Sigmoid colon (tissue), 7 donors: ENCODE measurements at regions of chr6 and their contacts with region 1.

Region 1: GRCh38 chr6:170024952-170025911 is 265.6 kb downstream of the DLL1 start:
- DNase-seq: peak; percentile 94
- H3K4me3 ChIP-seq: no peak overlapping the region
- H3K27ac ChIP-seq: peak overlapping the region in 2 of 4 donors; percentile 61 to 77
- H3K4me1 ChIP-seq: peaks cover 0 to 47% (median 30%) of the 10 kb centered on the region in 4 donors
- H3K27me3 ChIP-seq: peaks cover 0 to 12% (median 11%) of the 10 kb centered on the region in 3 donors
- CTCF ChIP-seq: no peak
- EP300 ChIP-seq: peak in 1 of 4 donors; percentile 33
- POLR2A ChIP-seq: no peak

Region 2: GRCh38 chr6:169427856-169428255 is 597.4 kb before region 1 on chr6:
- intact Hi-C with region 1: no loop called
- DNase-seq: peak; percentile 74
- H3K4me3 ChIP-seq: peak overlapping the region in 1 of 4 donors; percentile 0
- H3K27ac ChIP-seq: peak overlapping the region; percentile 59 to 70 (median 62)
- H3K4me1 ChIP-seq: peaks cover 0 to 17% (median 10%) of the 10 kb centered on the region in 4 donors
- H3K27me3 ChIP-seq: no peaks in the 10 kb centered on the region
- CTCF ChIP-seq: no peak
- EP300 ChIP-seq: no peak
- POLR2A ChIP-seq: no peak

Region 3: GRCh38 chr6:169959136-169960002 is 65.9 kb before region 1 on chr6:
- intact Hi-C with region 1: loop called (anchors 5 kb)
- DNase-seq: peak; percentile 82
- H3K4me3 ChIP-seq: no peak overlapping the region
- H3K27ac ChIP-seq: no peak overlapping the region
- H3K4me1 ChIP-seq: peaks cover 0 to 15% (median 10%) of the 10 kb centered on the region in 4 donors
- H3K27me3 ChIP-seq: peaks cover 4 to 17% (median 5%) of the 10 kb centered on the region in 3 donors
- CTCF ChIP-seq: no peak
- EP300 ChIP-seq: no peak
- POLR2A ChIP-seq: no peak

Region 4: DNA sequence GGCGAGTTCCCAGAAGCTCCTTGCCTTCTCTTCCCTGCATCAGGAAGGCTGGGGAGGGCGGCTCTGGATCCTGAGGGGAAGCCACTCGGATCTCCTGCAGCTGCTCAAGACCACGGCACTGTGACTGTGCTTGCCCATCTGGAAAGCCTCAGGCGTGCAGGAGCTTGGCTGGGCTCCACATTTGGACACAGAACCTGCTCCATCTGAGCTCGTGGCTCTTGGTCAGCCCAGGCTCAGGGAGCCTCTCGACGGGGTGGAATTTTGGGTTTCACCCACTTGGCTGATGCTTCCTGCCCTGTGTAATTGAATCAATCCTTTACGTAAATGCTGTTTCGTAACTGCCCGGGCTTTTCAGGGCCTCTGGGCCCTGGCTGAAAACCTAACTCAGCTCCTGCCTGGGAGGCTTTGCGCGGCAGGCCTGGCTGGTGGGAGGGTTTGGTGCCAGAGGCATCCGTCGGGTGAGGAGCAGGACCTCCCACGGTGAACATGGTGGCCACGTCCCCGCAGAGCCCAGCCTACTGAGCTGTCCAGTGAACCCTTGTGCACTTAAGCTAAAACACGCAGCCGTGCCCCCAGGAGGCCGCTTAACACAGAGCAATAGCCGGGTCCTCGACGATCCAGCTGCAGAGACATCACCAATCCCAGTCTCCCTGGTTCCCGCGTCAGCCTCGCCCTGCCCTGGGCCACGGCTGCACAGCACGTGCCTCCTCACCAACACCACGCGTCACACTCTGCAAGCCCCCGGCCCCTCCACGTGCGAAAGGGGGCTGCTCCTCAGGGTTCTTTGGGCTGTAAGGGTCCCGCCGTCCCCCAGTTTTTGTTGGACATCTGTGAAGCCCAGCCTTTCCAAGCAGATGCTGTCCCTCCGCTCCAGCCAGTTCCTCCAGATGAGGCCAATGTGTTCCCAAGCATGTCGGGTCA is 24.7 kb after region 1 on chr6:
- intact Hi-C with region 1: loop called (anchors 1 kb)
- DNase-seq: peak; percentile 99
- H3K4me3 ChIP-seq: no peak overlapping the region
- H3K27ac ChIP-seq: peak overlapping the region; percentile 72 to 91 (median 79)
- H3K4me1 ChIP-seq: peaks cover 0 to 52% (median 31%) of the 10 kb centered on the region in 4 donors
- H3K27me3 ChIP-seq: no peaks in the 10 kb centered on the region
- CTCF ChIP-seq: no peak
- EP300 ChIP-seq: peak; percentile 53 to 94 (median 83)
- POLR2A ChIP-seq: no peak

Region 5: GRCh38 chr6:170087941-170088581 is 62.8 kb after region 1 on chr6:
- intact Hi-C with region 1: loop called (anchors 5 kb)
- DNase-seq: peak; percentile 63
- H3K4me3 ChIP-seq: no peak overlapping the region
- H3K27ac ChIP-seq: no peak overlapping the region
- H3K4me1 ChIP-seq: peaks cover 0 to 23% (median 3%) of the 10 kb centered on the region in 4 donors
- H3K27me3 ChIP-seq: no peaks in the 10 kb centered on the region
- CTCF ChIP-seq: no peak
- EP300 ChIP-seq: no peak
- POLR2A ChIP-seq: no peak

Region 6: GRCh38 chr6:170306324-170307079 is 281.3 kb after region 1 on chr6 and contains the start of gene FAM120B:
- intact Hi-C with region 1: loop called (anchors 10 kb)
- DNase-seq: peak; percentile 98
- H3K4me3 ChIP-seq: peak within 1 kb of the TSS; percentile 82 to 90 (median 88)
- H3K27ac ChIP-seq: peak within 1 kb of the TSS; percentile 85 to 89 (median 86)
- H3K4me1 ChIP-seq: peaks cover 0 to 42% (median 28%) of the 10 kb centered on the region in 4 donors
- H3K27me3 ChIP-seq: no peaks in the 10 kb centered on the region
- CTCF ChIP-seq: no peak
- EP300 ChIP-seq: no peak
- POLR2A ChIP-seq: peak; percentile 51 to 76
- total RNA-seq, gene FAM120B: 29.6 to 55.0 (median 45.7) TPM